ENCODE measurements at regions of chr9 and their contacts with region 1.

Region 1: DNA sequence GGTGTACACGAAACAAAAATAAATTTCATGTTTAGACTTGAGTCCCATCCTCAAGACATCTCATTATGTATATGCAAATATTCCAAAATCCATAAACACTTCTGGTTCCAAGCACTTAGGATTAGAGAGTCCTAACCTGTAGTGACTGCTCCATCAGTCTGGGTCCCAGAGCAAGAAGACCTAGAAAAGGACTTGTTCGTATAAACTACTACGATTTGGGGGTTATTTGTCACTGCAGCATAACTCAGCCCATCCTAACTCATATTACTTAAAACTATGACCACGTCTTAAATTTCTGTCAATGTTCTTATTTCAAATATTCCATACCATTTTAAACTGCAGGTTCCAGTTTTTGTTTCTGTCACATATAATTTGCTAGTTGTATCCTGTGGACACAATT is 463.0 kb downstream of the AGTPBP1 start:
- DNase-seq: no peak
- H3K4me3 ChIP-seq: no peak overlapping the region
- H3K27ac ChIP-seq: no peak overlapping the region
- H3K4me1 ChIP-seq: no peaks in the 10 kb centered on the region
- H3K27me3 ChIP-seq: no peaks in the 10 kb centered on the region
- CTCF ChIP-seq: no peak
- POLR2A ChIP-seq: no peak

Region 2: DNA sequence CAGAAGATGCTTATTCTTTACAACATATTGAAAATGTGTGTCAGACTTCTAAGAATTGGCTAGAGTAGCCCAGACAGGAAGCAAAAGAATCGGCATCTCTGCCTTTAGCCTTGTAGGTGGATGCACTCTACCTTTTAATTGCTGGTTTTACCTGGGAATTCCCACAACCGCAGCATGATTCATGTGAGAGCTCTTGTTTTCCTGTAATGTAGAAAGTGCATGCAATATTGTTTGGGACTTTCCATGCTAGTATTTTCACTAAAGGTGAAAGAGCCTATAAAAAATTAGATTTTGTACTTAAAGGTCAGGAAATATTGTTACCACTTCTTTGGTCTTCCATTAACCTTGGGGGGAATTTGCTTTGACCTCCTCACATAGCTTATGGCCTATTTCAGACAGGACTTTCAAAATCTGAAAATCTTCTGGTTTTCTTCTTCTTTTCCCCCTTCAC is 519.4 kb before region 1 on chr9:
- intact Hi-C with region 1: no loop called
- DNase-seq: no peak
- H3K4me3 ChIP-seq: no peak overlapping the region
- H3K27ac ChIP-seq: peak overlapping the region in 1 of 2 donors; percentile 43
- H3K4me1 ChIP-seq: peaks cover 0 to 9% of the 10 kb centered on the region in 2 donors
- H3K27me3 ChIP-seq: no peaks in the 10 kb centered on the region
- CTCF ChIP-seq: no peak
- POLR2A ChIP-seq: no peak

Region 3: GRCh38 chr9:85248508-85249312 is 30.1 kb before region 1 on chr9:
- intact Hi-C with region 1: loop called (anchors 2 kb)
- DNase-seq: no peak
- H3K4me3 ChIP-seq: no peak overlapping the region
- H3K27ac ChIP-seq: no peak overlapping the region
- H3K4me1 ChIP-seq: peaks cover 0 to 5% of the 10 kb centered on the region in 2 donors
- H3K27me3 ChIP-seq: no peaks in the 10 kb centered on the region
- CTCF ChIP-seq: no peak
- POLR2A ChIP-seq: no peak

Region 4: DNA sequence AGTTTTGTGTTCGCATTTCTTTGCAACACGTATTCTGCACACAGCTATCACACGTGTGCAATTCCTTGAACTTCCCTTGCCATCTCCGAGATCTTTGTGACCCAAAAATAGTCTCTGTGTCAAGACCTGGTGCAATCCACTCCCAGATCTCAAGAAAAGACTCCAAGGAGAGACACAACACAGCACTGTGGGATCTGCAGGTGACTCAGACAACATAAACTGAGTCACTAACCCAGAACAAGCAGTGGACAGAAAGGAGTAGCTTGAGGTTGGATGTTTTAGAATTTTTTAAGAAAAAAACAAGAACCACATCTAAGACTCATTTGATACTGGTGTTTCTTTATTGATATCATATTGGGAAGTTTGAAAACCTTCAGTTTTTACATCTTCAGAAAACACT is 66.1 kb after region 1 on chr9:
- intact Hi-C with region 1: no loop called
- DNase-seq: no peak
- H3K4me3 ChIP-seq: no peak overlapping the region
- H3K27ac ChIP-seq: no peak overlapping the region
- H3K4me1 ChIP-seq: no peaks in the 10 kb centered on the region
- H3K27me3 ChIP-seq: no peaks in the 10 kb centered on the region
- CTCF ChIP-seq: no peak
- POLR2A ChIP-seq: no peak

Measured in breast epithelium (tissue), 4 donors.